PC-3 (cell line): ENCODE measurements at regions of chr14 and their contacts with region 1.

Region 1: GRCh38 chr14:59161561-59162175 is 26.8 kb upstream of the DAAM1 start:
- DNase-seq: peak; percentile 63
- ATAC-seq: no peak
- H3K4me3 ChIP-seq: no peak overlapping the region
- H3K27ac ChIP-seq: no peak overlapping the region
- H3K4me1 ChIP-seq: 0 out of 2 replicates have a peak, but pooled peaks cover 8% of the 10 kb centered on the region
- H3K27me3 ChIP-seq: peaks cover 80% of the 10 kb centered on the region
- CTCF ChIP-seq: no peak

Region 2: GRCh38 chr14:58914279-58914855 is 247.3 kb before region 1 on chr14:
- CTCF ChIA-PET with region 1: no interaction called
- POLR2A ChIA-PET with region 1: no interaction called
- intact Hi-C with region 1: no loop called
- DNase-seq: no peak
- ATAC-seq: no peak
- H3K4me3 ChIP-seq: no peak overlapping the region
- H3K27ac ChIP-seq: no peak overlapping the region
- H3K4me1 ChIP-seq: peaks cover 29% of the 10 kb centered on the region
- H3K27me3 ChIP-seq: no peaks in the 10 kb centered on the region
- CTCF ChIP-seq: no peak

Region 3: DNA sequence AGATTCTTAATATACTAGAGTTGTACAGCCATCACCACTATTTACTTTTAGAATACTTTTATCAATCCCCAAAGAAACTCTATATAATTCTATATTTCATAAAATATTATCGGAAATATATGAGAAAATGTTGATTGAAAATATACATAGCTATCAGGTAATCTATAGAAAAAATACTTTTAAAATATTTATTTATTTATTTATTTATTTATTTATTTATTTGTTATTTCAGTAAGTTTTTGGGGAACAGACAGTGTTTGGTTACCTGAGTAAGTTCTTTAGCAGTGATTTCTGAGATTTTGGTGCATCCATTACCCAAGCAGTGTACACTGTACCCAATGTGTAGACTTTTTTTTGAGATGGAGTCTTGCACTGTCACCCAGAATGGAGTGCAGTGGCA is 179.8 kb before region 1 on chr14:
- CTCF ChIA-PET with region 1: interaction called, 10 read pairs
- POLR2A ChIA-PET with region 1: no interaction called
- intact Hi-C with region 1: no loop called
- DNase-seq: no peak
- ATAC-seq: no peak
- H3K4me3 ChIP-seq: no peak overlapping the region
- H3K27ac ChIP-seq: no peak overlapping the region
- H3K4me1 ChIP-seq: peaks cover 10% of the 10 kb centered on the region
- H3K27me3 ChIP-seq: peaks cover 73% of the 10 kb centered on the region
- CTCF ChIP-seq: no peak

Region 4: GRCh38 chr14:59175404-59175803 is 13.7 kb after region 1 on chr14:
- CTCF ChIA-PET with region 1: no interaction called
- POLR2A ChIA-PET with region 1: no interaction called
- intact Hi-C with region 1: no loop called
- DNase-seq: no peak
- ATAC-seq: no peak
- H3K4me3 ChIP-seq: no peak overlapping the region
- H3K27ac ChIP-seq: no peak overlapping the region
- H3K4me1 ChIP-seq: no peaks in the 10 kb centered on the region
- H3K27me3 ChIP-seq: peaks cover 14% of the 10 kb centered on the region
- CTCF ChIP-seq: no peak